Psoas muscle (tissue), 8 donors: ENCODE measurements at regions of chr13 and their contacts with region 1.

Region 1: GRCh38 chr13:97302611-97303010 is 80.5 kb downstream of the MBNL2 start:
- DNase-seq: no peak
- ATAC-seq: peak in 2 of 4 donors; percentile 26 to 43
- H3K4me3 ChIP-seq: no peak overlapping the region
- H3K27ac ChIP-seq: peak overlapping the region; percentile 62
- H3K4me1 ChIP-seq: peaks cover 67% of the 10 kb centered on the region
- H3K27me3 ChIP-seq: no peaks in the 10 kb centered on the region
- CTCF ChIP-seq: no peak

Region 2: GRCh38 chr13:97231118-97231828 is 71.3 kb before region 1 on chr13:
- intact Hi-C with region 1: loop called in 1 of 2 experiments (anchors 5 kb)
- DNase-seq: no peak
- ATAC-seq: peak in 3 of 4 donors; percentile 29 to 46 (median 42)
- H3K4me3 ChIP-seq: no peak overlapping the region
- H3K27ac ChIP-seq: peak overlapping the region; percentile 28
- H3K4me1 ChIP-seq: peaks cover 87% of the 10 kb centered on the region
- H3K27me3 ChIP-seq: no peaks in the 10 kb centered on the region
- CTCF ChIP-seq: no peak

Region 3: DNA sequence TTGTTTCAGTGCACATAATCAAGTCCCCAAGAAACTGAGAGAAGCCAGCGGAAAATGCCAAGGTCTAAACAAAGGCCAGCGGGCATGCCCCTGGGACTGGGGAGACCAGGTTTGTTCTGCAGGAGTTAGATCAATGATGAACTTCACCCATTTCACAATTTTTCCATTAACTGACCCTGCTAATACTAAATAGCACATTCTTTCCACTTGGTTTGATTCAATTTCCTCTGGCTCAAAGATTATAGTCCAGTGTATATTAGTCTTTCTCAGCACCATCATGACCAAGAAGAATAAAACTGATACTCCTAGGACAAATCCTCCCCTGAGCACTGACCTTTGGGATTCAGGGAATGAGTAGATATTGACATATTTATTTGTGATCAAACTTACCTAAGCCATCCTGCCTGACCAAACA is 14.1 kb before region 1 on chr13:
- intact Hi-C with region 1: loop called in 1 of 2 experiments (anchors 2 kb)
- DNase-seq: no peak
- ATAC-seq: no peak
- H3K4me3 ChIP-seq: no peak overlapping the region
- H3K27ac ChIP-seq: peak overlapping the region; percentile 38
- H3K4me1 ChIP-seq: peaks cover 73% of the 10 kb centered on the region
- H3K27me3 ChIP-seq: no peaks in the 10 kb centered on the region
- CTCF ChIP-seq: no peak